Activated CD8-positive, alpha-beta memory T cell treated with anti-CD3 and anti-CD28 coated beads, Interleukin-2, amount 10 ng/mL, durations not matched to agents 7 days and 5 days (primary cell): ENCODE measurements at regions of chr22 and their contacts with region 1.

Region 1: DNA sequence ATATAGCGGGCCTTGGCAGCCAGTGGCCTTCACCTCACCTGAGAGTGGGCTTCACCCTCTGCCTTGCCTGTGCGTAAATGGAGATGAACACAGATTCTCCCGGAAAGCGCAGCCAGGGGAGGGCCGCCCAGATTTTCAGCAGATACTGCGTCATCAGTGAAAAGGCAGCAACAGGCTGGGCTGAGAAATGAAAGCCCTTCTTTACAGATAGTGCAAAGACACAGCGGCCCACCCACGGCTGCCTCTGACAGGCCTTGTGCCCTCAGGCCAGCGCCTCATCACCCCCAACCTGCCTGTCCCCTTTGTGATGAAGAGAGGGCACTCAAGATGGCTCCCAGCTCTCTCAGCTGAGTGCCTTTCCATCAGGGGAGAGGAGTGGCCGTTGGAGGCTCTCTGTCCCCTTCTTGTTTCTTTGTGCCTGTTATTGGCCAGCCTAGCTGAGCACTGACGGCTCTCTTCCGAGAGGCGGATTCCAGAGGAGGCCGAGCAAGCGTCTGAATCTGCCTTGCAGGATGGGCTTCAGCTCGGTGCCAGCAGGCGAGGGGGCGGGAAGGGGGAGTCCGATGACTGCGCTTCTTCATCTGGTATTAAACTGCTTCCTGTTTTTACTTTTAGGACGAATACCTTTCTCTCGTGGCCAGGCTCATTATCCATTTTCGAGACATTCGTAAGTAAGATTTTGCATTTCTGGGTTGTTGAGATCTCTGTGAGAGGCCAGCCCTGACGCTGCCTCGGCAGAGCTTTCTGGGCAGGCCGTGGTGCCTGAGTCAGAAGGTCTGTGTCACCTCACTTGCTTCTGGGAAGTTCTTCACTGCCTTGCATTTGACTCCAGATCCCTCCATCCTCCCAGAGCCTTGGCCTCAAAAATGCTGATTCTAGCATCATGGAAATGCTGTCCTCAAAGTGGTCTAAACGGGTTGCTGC is 43.7 kb downstream of the MED15 start:
- DNase-seq: peak; percentile 77
- ATAC-seq: peak; percentile 51
- H3K4me3 Mint-ChIP-seq: peak overlapping the region; percentile 74
- H3K27ac Mint-ChIP-seq: peak overlapping the region; percentile 96
- H3K4me1 Mint-ChIP-seq: peaks cover 89% of the 10 kb centered on the region
- H3K27me3 Mint-ChIP-seq: no peaks in the 10 kb centered on the region

Region 2: DNA sequence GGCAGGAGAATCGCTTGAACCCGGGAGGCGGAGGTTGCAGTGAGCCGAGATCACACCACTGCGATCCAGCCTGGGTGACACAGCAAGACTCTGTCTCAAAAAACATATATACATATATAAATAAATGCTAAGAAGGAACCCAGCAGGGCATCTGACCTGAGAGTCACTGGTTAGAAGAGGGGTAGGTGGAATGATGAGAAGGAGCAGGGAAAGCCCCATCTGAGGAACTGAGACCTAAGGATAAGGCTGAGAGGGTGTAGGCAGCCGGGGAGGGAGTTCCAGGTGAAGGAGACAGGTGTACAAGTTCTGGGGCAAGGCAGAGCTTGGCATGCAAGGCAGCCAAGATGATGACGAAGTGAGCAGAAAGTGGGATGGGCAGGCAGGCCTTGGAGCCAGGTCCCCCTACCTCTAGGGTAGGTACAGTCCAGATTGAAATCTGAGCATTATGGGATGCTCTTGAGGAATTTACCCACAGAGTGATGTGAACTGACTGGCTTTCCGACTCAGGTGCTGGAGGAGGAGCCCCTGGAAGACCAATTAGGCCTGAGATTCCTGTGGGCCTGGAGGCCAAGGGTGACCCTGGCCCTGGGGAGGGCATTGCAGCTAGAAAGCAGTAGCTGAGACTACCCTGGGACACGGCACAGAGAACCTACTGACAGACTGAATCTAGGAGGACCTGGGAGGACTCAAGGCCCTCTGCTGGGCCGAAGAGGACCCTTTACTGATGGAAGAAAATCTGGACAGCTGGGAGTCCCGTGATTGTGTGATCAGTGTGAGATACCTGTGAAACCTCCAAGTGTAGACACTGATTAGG is 78.2 kb before region 1 on chr22:
- CTCF ChIA-PET with region 1: no interaction called
- DNase-seq: no peak
- ATAC-seq: no peak
- H3K4me3 Mint-ChIP-seq: no peak overlapping the region
- H3K27ac Mint-ChIP-seq: no peak overlapping the region
- H3K4me1 Mint-ChIP-seq: peaks cover 19% of the 10 kb centered on the region
- H3K27me3 Mint-ChIP-seq: no peaks in the 10 kb centered on the region

Region 3: GRCh38 chr22:20507253-20508066 is 43.6 kb before region 1 on chr22 and contains the start of gene MED15:
- CTCF ChIA-PET with region 1: interaction called, 20 read pairs
- DNase-seq: peak; percentile 95
- ATAC-seq: peak; percentile 89
- H3K4me3 Mint-ChIP-seq: peak within 1 kb of the TSS; percentile 97
- H3K27ac Mint-ChIP-seq: peak within 1 kb of the TSS; percentile 95
- H3K4me1 Mint-ChIP-seq: peaks cover 48% of the 10 kb centered on the region
- H3K27me3 Mint-ChIP-seq: no peaks in the 10 kb centered on the region
- total RNA-seq, gene MED15: 145 to 179 TPM

Region 4: GRCh38 chr22:20591660-20592310 is 40.7 kb after region 1 on chr22:
- CTCF ChIA-PET with region 1: no interaction called
- DNase-seq: no peak
- ATAC-seq: no peak
- H3K4me3 Mint-ChIP-seq: no peak overlapping the region
- H3K27ac Mint-ChIP-seq: no peak overlapping the region
- H3K4me1 Mint-ChIP-seq: no peaks in the 10 kb centered on the region
- H3K27me3 Mint-ChIP-seq: no peaks in the 10 kb centered on the region